ENCODE measurements at regions of chr1 and their contacts with region 1.

Region 1: DNA sequence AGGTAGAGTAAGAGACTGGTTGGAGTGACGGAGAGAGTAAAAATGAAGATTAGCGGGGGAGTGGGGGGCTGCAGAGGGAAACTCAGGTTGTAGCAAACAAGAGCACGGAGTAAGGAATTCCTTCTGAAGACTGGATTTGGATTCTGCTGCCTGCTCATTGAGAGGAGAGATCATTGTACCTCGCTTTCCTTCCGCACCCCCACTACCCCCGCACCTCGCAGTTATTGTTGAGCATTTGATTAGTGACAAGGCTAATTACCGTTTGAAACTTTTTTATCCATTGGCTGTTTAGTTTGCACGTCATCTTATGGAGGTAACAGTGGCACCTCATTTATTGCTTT is 463 bp downstream of the PRPF3 start:
- DNase-seq: no peak
- H3K4me3 Mint-ChIP-seq: peak overlapping the region; percentile 99
- H3K27ac Mint-ChIP-seq: peak overlapping the region; percentile 98
- H3K4me1 Mint-ChIP-seq: peaks cover 28% of the 10 kb centered on the region
- H3K27me3 Mint-ChIP-seq: peaks cover 1% of the 10 kb centered on the region

Region 2: DNA sequence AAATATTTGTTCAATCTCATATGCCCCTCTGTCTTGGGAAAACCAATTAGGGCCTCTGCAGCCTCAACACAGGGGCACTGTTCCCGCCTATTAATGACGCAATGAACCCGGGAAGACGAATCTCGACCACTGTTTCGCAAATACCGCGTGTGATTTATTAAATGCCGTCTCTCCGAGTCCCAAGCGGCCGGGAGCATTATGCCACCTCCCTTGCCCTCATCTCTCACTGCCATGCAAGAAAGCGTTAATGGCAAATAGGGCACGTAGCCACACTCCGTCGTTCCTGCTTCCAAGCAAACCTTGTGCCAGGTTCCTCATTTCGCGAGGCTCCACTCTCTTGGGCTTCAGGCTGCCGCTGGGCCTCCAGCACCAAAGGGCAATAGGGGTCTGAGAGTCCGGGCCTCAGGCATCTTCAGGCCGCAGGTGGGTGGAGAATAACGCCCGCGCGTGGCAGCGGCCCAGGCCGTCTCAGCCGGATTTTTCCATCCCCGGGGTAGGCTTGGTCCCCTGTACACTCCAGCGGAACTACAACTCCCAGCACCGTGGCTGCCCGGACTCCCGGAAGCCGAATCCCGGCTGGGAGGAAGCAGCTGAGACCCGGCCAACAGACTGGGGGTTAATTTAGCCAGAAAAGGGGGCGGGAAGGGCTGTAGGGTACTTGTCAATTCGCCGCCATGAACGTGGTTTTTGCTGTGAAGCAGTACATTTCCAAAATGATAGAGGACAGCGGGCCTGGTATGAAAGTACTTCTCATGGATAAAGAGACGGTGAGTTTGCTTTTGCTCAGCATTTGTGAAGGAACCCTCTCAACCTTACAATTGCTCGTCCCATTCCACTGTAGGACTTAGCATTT is 254.4 kb before region 1 on chr1 and contains the start of gene VPS45:
- intact Hi-C with region 1: loop called (anchors 1 kb)
- DNase-seq: peak; percentile 83
- H3K4me3 Mint-ChIP-seq: peak within 1 kb of the TSS; percentile 97
- H3K27ac Mint-ChIP-seq: peak within 1 kb of the TSS; percentile 98
- H3K4me1 Mint-ChIP-seq: peaks cover 45% of the 10 kb centered on the region
- H3K27me3 Mint-ChIP-seq: peaks cover 5% of the 10 kb centered on the region
- total RNA-seq, gene VPS45: 25.9 and 30.2 TPM in 2 replicates

Region 3: DNA sequence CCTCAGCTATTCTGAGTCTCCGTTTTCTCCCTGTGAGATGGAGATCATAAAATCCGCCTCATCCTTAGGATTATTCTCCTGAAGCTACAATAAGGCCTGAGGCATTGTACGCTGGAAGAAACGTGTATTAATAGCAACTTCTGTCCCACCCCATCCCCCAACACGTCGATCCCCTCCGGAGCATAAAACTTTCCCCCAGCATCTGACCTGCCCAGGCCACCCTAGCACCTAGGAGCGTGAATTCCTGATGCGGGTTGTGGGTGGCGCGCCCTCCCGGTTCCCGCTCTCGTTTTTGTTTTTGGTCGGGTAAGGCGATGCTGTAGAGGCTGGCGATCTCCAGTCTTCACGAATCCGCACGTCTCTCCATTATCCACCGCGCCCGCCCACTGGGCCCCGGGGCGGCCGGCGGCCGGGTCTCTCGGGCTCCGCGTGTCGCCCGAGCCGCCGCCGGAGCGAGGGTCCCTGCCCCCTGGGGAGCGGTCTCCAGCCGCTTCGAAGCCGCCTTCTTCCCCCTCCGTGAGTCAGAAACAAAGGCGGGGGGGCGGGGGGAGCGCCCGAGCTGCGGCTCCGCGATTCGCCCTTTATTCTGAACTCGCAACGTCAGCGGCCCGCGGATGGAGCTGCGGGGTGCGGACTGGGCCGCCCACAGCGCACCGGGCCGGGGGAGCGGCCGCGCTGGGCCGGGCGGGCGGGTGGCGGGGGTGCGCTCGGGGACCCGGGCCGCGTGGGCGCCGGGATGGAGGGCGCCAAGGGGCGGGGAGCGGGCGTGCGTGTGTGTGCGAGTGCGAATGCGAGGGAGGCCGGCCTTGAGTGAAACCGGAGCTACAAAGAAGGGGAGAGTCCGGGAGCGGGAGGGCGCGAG is 172.3 kb before region 1 on chr1 and contains the start of gene PLEKHO1:
- intact Hi-C with region 1: no loop called
- DNase-seq: peak; percentile 68
- H3K4me3 Mint-ChIP-seq: peak within 1 kb of the TSS; percentile 87
- H3K27ac Mint-ChIP-seq: peak within 1 kb of the TSS; percentile 79
- H3K4me1 Mint-ChIP-seq: peaks cover 47% of the 10 kb centered on the region
- H3K27me3 Mint-ChIP-seq: peaks cover 24% of the 10 kb centered on the region
- total RNA-seq, gene PLEKHO1: 27.1 and 35.4 TPM in 2 replicates

Region 4: GRCh38 chr1:150168960-150169601 is 152.7 kb before region 1 on chr1:
- intact Hi-C with region 1: no loop called
- DNase-seq: peak; percentile 28
- H3K4me3 Mint-ChIP-seq: no peak overlapping the region
- H3K27ac Mint-ChIP-seq: no peak overlapping the region
- H3K4me1 Mint-ChIP-seq: no peaks in the 10 kb centered on the region
- H3K27me3 Mint-ChIP-seq: peaks cover 11% of the 10 kb centered on the region

Region 5: GRCh38 chr1:150259758-150260669 is 61.8 kb before region 1 on chr1:
- intact Hi-C with region 1: loop called (anchors 1 kb)
- DNase-seq: no peak
- H3K4me3 Mint-ChIP-seq: no peak overlapping the region
- H3K27ac Mint-ChIP-seq: no peak overlapping the region
- H3K4me1 Mint-ChIP-seq: peaks cover 19% of the 10 kb centered on the region
- H3K27me3 Mint-ChIP-seq: peaks cover 37% of the 10 kb centered on the region

Region 6: GRCh38 chr1:150281837-150282653 is 39.8 kb before region 1 on chr1 and contains the start of gene CIART:
- intact Hi-C with region 1: loop called (anchors 5 kb)
- DNase-seq: peak; percentile 69
- H3K4me3 Mint-ChIP-seq: peak within 1 kb of the TSS; percentile 87
- H3K27ac Mint-ChIP-seq: peak within 1 kb of the TSS; percentile 80
- H3K4me1 Mint-ChIP-seq: peaks cover 38% of the 10 kb centered on the region
- H3K27me3 Mint-ChIP-seq: peaks cover 4% of the 10 kb centered on the region
- total RNA-seq, gene CIART: 3.4 TPM in 2 replicates

Region 7: GRCh38 chr1:150309770-150310508 is 11.9 kb before region 1 on chr1:
- intact Hi-C with region 1: no loop called
- DNase-seq: no peak
- H3K4me3 Mint-ChIP-seq: no peak overlapping the region
- H3K27ac Mint-ChIP-seq: no peak overlapping the region
- H3K4me1 Mint-ChIP-seq: no peaks in the 10 kb centered on the region
- H3K27me3 Mint-ChIP-seq: no peaks in the 10 kb centered on the region

Region 8: DNA sequence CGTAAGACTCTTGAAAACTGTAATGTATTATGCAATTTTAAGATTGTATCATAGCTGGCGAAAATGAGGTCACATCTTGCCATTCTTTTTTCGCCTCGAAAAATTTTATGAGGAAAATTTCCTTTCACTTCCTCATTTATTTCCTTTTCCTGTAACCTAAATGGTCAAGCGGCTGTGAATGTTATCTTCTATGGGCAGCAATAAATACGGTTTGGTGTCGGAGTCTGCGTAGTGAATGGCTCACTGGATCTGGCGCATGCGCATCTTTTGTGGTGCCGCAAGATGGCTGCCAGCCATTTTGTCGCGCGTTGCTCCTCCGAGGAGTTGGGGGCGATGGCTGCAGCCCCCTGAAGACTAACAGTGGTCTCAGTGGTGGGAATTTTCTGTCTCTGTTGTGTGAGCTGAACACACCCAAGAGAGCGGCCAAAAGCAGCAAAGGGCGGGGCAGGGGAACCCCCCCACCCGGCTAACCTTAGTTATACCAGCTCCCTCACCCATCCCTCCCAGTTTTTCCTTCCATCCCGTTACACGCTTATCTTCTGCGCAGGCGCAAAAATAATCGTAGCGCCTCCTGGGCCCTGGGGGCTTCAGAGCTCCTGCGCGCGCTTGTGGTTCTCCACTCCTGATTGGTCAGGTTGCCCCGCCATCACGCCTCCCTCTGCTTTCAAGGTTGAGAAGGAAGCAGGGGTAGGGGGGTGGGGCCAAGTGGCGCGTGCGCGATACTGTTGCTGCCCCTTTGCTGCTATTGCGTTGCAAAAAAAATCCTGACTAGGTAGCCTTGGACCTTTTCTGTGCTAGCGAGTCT is 41.8 kb after region 1 on chr1 and contains the start of gene RPRD2:
- intact Hi-C with region 1: loop called (anchors 1 kb)
- DNase-seq: peak; percentile 99
- H3K4me3 Mint-ChIP-seq: peak within 1 kb of the TSS; percentile 99
- H3K27ac Mint-ChIP-seq: peak within 1 kb of the TSS; percentile 97
- H3K4me1 Mint-ChIP-seq: peaks cover 41% of the 10 kb centered on the region
- H3K27me3 Mint-ChIP-seq: no peaks in the 10 kb centered on the region
- total RNA-seq, gene RPRD2: 24.4 and 24.7 TPM in 2 replicates

Region 9: GRCh38 chr1:150548632-150549495 is 227.1 kb after region 1 on chr1 and contains the start of gene ADAMTSL4:
- intact Hi-C with region 1: no loop called
- DNase-seq: no peak
- H3K4me3 Mint-ChIP-seq: peak within 1 kb of the TSS; percentile 86
- H3K27ac Mint-ChIP-seq: peak within 1 kb of the TSS; percentile 74
- H3K4me1 Mint-ChIP-seq: peaks cover 34% of the 10 kb centered on the region
- H3K27me3 Mint-ChIP-seq: peaks cover 22% of the 10 kb centered on the region
- total RNA-seq, gene ADAMTSL4: 1.2 and 1.3 TPM in 2 replicates

Region 10: DNA sequence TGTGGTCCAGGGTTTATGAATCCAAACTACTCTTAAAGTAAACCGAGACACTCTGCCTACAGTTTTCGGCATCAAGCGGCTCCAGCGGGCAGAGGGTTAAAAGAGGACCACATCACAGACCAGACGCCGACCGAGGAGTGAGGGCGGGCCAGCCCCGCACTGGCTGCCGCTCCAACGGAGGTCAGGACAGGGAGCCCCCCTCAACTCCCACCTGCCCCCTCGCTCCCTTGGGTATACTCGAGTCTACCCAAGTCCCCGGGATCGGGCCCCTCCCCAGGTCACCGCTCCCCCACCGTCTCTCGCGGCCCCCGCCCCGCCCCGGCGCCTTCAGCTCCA is 554.3 kb after region 1 on chr1:
- intact Hi-C with region 1: loop called (anchors 1 kb)
- DNase-seq: no peak
- H3K4me3 Mint-ChIP-seq: peak overlapping the region; percentile 86
- H3K27ac Mint-ChIP-seq: peak overlapping the region; percentile 88
- H3K4me1 Mint-ChIP-seq: peaks cover 34% of the 10 kb centered on the region
- H3K27me3 Mint-ChIP-seq: no peaks in the 10 kb centered on the region